ENCODE measurements at regions of chr22 and their contacts with region 1.

Region 1: DNA sequence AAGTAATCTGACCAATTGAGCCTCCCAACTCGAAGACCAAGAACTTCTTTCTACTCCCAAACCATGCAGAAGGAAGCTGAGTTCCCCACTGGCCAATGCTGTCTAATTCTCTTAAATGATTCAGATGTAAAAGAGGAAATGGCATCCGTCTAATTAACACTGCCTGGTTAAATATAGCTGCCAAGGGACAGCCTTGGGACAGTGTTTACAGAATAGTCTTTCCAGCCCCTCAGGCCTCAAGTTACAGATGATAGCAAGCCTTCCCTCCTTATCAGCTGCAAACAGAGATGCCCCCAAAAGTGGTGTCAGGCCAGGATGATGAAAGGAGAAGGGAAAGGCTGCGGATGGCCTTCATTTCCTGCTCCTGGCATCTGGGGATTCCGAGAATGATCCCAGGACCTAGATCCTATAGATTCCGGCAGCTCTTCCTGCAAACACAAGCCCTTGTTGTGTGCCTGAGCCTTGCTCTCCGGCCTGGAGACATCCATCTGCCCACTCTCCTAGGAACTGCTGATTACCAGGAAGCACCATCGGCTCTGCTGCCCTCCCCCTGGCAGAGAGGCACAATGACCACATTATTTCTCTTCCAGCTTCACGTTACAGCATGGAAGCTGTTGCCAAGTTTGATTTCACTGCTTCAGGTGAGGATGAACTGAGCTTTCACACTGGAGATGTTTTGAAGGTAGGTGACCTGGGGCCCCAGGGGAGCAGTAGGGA is 13.5 kb upstream of the TMA7B start:
- DNase-seq: peak; percentile 60
- ATAC-seq: no peak
- H3K4me3 ChIP-seq: peak overlapping the region in 2 of 5 experiments; percentile 1 to 17
- H3K4me3 Mint-ChIP-seq: peak overlapping the region; percentile 76
- H3K27ac ChIP-seq: peak overlapping the region; percentile 23 to 40
- H3K27ac Mint-ChIP-seq: peak overlapping the region; percentile 57
- H3K4me1 ChIP-seq: peaks cover 73 to 76% of the 10 kb centered on the region in 2 donors
- H3K4me1 Mint-ChIP-seq: peaks cover 70% of the 10 kb centered on the region
- H3K27me3 ChIP-seq: no peaks in the 10 kb centered on the region
- H3K27me3 Mint-ChIP-seq: no peaks in the 10 kb centered on the region
- CTCF ChIP-seq: no peak

Region 2: DNA sequence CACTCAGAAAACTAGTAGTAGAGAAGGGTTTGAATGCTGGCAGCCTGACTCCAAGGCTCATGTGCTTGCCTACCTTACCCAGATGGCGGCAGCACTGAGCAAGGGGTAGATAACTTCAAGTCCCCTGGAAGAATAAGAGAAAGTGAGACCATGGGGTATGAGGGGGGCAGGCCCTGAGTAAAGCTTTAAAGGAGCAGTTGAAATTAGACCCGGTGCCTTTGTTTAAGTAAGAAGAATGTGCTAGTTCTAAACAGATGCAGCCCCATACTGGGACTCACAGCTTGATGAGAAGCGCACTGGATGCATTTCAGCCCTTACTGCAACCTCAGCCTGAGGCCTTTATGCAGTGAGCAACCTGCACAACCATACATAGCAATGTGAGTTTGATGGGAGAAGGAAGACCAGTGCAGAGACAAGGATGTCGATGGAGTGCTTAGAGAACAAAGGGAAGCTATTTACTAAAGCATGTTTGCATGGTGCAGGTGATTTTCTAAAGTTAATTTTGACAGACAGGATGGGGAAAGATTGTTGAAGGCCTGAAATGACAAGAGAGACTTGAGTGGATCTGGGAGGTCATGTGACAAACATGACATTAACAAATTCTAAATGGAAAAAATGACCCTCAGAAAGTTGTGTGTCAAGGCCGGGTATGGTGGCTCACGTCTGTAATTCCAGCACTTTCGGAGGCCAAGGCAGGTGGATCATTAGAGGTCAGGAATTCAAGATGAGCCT is 13.6 kb before region 1 on chr22:
- CTCF ChIA-PET with region 1: interaction called, 14 read pairs
- POLR2A ChIA-PET with region 1: interaction called, 4 read pairs
- intact Hi-C with region 1: no loop called
- DNase-seq: peak; percentile 43
- ATAC-seq: no peak
- H3K4me3 ChIP-seq: no peak overlapping the region
- H3K4me3 Mint-ChIP-seq: peak overlapping the region; percentile 67
- H3K27ac ChIP-seq: peak overlapping the region in 1 of 2 donors; percentile 69
- H3K27ac Mint-ChIP-seq: peak overlapping the region; percentile 83
- H3K4me1 ChIP-seq: peaks cover 68 to 77% of the 10 kb centered on the region in 2 donors
- H3K4me1 Mint-ChIP-seq: peaks cover 56% of the 10 kb centered on the region
- H3K27me3 ChIP-seq: no peaks in the 10 kb centered on the region
- H3K27me3 Mint-ChIP-seq: no peaks in the 10 kb centered on the region
- CTCF ChIP-seq: peak; percentile 55